ENCODE measurements at regions of chr5 and their contacts with region 1.

Region 1: DNA sequence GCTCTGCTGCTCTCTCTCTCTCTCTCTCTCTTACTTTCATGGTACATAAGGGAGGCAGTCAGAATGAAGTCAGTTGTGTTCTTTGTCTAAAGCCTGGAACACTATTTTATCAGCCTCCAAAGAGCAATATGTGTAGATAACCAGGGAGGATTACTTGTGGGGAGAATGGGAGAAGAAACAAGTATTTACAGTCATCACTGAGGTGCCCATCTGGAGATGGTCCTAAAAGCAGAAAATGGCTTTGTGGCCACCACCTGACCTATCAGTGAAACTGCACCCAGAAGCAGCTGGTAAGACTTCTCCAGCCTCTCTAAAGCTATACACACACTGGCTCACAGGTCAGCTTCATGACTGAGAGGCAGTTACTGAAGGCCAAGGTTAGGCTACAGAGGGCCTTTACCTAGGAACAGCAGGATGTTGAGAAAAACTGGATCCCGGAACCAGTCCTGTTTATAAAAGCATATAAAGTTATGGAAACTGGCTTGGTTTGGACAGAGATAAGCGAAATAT is 75.1 kb downstream of the MRPS27 start:
- DNase-seq: peak; percentile 36
- H3K4me3 ChIP-seq: no peak overlapping the region
- H3K27ac ChIP-seq: no peak overlapping the region
- H3K4me1 ChIP-seq: peaks cover 14% of the 10 kb centered on the region
- CTCF ChIP-seq: peak; percentile 50

Region 2: DNA sequence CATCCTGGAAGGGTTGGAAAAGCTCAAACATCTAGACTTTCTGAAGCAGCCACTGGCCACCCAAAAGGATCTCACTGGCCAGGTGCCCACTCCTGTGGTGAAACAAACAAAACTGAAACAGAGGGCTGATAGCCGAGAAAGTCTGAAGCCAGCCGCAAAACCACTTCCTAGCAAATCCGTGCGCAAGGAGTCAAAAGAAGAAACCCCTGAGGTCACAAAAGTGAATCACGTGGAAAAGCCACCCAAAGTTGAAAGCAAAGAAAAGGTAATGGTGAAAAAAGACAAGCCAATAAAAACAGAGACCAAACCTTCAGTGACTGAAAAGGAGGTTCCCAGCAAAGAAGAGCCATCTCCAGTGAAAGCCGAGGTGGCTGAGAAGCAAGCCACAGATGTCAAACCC is 50.1 kb before region 1 on chr5:
- CTCF ChIA-PET with region 1: no interaction called
- POLR2A ChIA-PET with region 1: no interaction called
- intact Hi-C with region 1: loop called (anchors 5 kb)
- DNase-seq: no peak
- H3K4me3 ChIP-seq: no peak overlapping the region
- H3K27ac ChIP-seq: no peak overlapping the region
- H3K4me1 ChIP-seq: peaks cover 8% of the 10 kb centered on the region
- CTCF ChIP-seq: no peak

Region 3: GRCh38 chr5:72288924-72289323 is 44.0 kb after region 1 on chr5:
- CTCF ChIA-PET with region 1: no interaction called
- POLR2A ChIA-PET with region 1: interaction called, 10 read pairs
- intact Hi-C with region 1: no loop called
- DNase-seq: no peak
- H3K4me3 ChIP-seq: no peak overlapping the region
- H3K27ac ChIP-seq: no peak overlapping the region
- H3K4me1 ChIP-seq: peaks cover 85% of the 10 kb centered on the region
- CTCF ChIP-seq: no peak

Measured in OCI-LY7 (cell line).